ENCODE measurements at regions of chr11 and their contacts with region 1.

Region 1: DNA sequence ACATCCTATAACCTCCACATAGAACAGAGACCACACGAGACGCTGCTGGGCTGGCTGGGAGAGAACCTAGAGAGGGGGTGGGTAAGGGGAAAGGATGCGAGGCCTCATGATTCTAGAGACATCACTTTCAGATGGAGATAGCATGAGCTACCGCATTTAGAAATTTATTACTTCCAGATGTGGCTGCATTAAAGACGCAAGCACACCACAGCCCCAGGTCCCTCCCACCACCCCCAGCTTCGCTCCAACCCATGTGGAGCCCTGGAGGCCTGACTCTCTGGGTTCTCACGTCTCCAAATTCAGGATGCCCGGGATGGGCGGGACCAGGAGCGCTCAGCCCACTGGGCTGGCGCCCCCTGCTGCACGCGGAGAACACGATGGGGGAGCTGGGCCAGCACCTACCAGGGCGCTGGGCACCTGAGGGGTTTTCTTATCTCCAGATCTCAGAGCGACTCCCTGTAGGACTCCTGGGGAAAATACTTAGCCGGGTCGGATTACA is 13.6 kb downstream of the MRPL21 start:
- DNase-seq: no peak
- H3K4me3 ChIP-seq: no peak overlapping the region
- H3K27ac ChIP-seq: peak overlapping the region in 43 of 59 donors; percentile 7 to 90 (median 74)
- H3K27me3 ChIP-seq: no peaks in the 10 kb centered on the region
- CTCF ChIP-seq: peak in 25 of 56 donors; percentile 9 to 39 (median 21)

Region 2: GRCh38 chr11:68751004-68751856 is 138.8 kb before region 1 on chr11 and contains the start of gene TESMIN:
- intact Hi-C with region 1: no loop called
- DNase-seq: peak in 8 of 10 donors; percentile 6 to 70 (median 40)
- H3K4me3 ChIP-seq: peak within 1 kb of the TSS in 37 of 59 donors; percentile 4 to 55 (median 38)
- H3K27ac ChIP-seq: no peak within 1 kb of the TSS
- H3K27me3 ChIP-seq: peaks cover 0 to 31% (median 6%) of the 10 kb centered on the region in 45 donors
- CTCF ChIP-seq: no peak
- total RNA-seq, gene TESMIN: 0.28 to 4.8 (median 1.9) TPM in 119 of 120 experiments, not detected in the other

Region 3: DNA sequence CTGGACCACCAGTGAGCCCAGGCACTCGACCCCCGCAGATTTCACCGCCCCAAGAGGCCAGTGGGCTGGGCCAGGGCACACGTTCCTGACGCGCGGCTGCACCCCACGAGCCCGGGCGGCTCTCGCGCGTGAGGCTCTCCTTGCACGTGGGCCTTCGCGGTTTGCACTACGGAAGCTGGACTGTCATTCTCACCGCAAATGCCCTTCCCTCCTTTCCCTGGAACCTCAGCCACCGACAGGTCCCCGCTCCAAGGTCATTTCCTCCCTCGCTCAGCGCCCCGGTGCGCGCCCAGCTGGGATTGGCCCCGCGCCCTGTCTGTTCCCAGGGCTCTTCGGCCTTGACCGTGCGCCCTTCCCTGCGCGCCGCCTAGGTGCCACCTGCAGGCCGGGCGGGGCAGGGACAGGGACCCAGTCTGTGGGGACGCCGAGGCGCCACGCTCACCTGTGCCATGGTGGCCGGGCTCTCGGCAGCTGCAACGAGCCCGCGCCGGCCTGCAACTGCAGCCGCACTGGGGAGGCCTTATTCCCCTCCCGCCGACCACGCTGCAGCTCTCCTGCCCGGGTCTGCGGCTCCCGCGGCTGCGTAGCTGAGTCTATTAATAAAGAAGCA is 46.2 kb before region 1 on chr11:
- intact Hi-C with region 1: loop called in 1 of 2 experiments (anchors 5 kb)
- DNase-seq: peak in 4 of 10 donors; percentile 11 to 59 (median 23)
- H3K4me3 ChIP-seq: peak overlapping the region in 57 of 59 donors; percentile 1 to 77 (median 58)
- H3K27ac ChIP-seq: peak overlapping the region in 10 of 59 donors; percentile 3 to 58 (median 27)
- H3K27me3 ChIP-seq: peaks cover 0 to 60% (median 18%) of the 10 kb centered on the region in 45 donors
- CTCF ChIP-seq: peak in 41 of 56 donors; percentile 7 to 48 (median 34)